Heart right ventricle (tissue), 16 donors: ENCODE measurements at regions of chr7 and their contacts with region 1.

Region 1: GRCh38 chr7:80637911-80638765 is at the start of gene CD36:
- DNase-seq: peak in 1 of 2 donors; percentile 70
- ATAC-seq: peak; percentile 58 to 80 (median 73)
- H3K4me3 ChIP-seq: peak within 1 kb of the TSS; percentile 34 to 63 (median 49)
- H3K27ac ChIP-seq: peak within 1 kb of the TSS; percentile 38 to 91 (median 78)
- H3K4me1 ChIP-seq: peaks cover 0 to 69% (median 48%) of the 10 kb centered on the region in 9 donors
- H3K27me3 ChIP-seq: no peaks in the 10 kb centered on the region
- CTCF ChIP-seq: no peak
- total RNA-seq, gene CD36: 509 to 1,458 (median 988) TPM

Region 2: DNA sequence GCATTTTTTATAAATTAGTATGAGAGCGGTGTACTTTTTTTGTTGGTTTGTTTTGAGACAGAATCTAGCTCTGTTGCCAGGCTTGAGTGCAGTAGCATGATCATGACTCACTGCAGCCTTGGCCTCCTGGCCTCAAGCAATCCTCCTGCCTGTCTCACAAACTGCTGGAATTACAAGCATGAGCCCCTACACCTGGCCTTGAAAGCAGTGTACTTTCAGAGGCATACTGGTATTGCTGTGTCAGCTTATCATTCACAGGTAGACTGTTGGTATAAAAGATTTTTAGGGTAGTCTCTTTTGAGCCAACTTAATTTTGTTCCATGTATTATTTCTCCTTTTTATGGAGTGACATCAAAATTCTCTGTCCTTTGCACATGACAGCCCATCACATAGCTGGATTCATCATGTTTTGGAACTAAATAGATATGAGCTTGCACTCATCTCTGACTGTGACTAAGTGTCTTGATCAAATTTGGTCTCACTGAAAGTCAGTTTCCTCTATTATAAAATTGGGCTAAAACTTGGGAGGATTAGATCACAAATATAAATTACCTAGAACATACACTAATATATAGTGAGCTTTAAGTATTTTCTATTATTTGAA is 138.7 kb before region 1 on chr7:
- intact Hi-C with region 1: loop called in 1 of 10 experiments (anchors 5 kb)
- DNase-seq: peak; percentile 23 to 50
- ATAC-seq: peak; percentile 53 to 90 (median 87)
- H3K4me3 ChIP-seq: no peak overlapping the region
- H3K27ac ChIP-seq: peak overlapping the region in 9 of 10 donors; percentile 56 to 84 (median 68)
- H3K4me1 ChIP-seq: peaks cover 6 to 44% (median 33%) of the 10 kb centered on the region in 9 donors
- H3K27me3 ChIP-seq: no peaks in the 10 kb centered on the region
- CTCF ChIP-seq: no peak

Region 3: GRCh38 chr7:80517282-80517747 is 120.8 kb before region 1 on chr7:
- intact Hi-C with region 1: loop called in 1 of 10 experiments (anchors 10 kb)
- DNase-seq: no peak
- ATAC-seq: peak in 6 of 8 donors; percentile 50 to 81 (median 73)
- H3K4me3 ChIP-seq: no peak overlapping the region
- H3K27ac ChIP-seq: peak overlapping the region in 7 of 10 donors; percentile 5 to 64 (median 47)
- H3K4me1 ChIP-seq: peaks cover 0 to 20% (median 12%) of the 10 kb centered on the region in 9 donors
- H3K27me3 ChIP-seq: no peaks in the 10 kb centered on the region
- CTCF ChIP-seq: peak in 5 of 9 donors; percentile 13 to 64 (median 56)

Region 4: GRCh38 chr7:80584778-80585177 is 53.4 kb before region 1 on chr7:
- intact Hi-C with region 1: loop called in 1 of 10 experiments (anchors 10 kb)
- DNase-seq: no peak
- ATAC-seq: peak in 2 of 8 donors; percentile 28 to 59
- H3K4me3 ChIP-seq: no peak overlapping the region
- H3K27ac ChIP-seq: peak overlapping the region in 5 of 10 donors; percentile 23 to 79 (median 69)
- H3K4me1 ChIP-seq: peaks cover 2 to 63% (median 36%) of the 10 kb centered on the region in 9 donors
- H3K27me3 ChIP-seq: no peaks in the 10 kb centered on the region
- CTCF ChIP-seq: no peak

Region 5: GRCh38 chr7:80604436-80604835 is 33.7 kb before region 1 on chr7:
- intact Hi-C with region 1: loop called in 5 of 10 experiments (anchors 2 to 5 kb)
- DNase-seq: no peak
- ATAC-seq: peak; percentile 75 to 94 (median 90)
- H3K4me3 ChIP-seq: peak overlapping the region in 7 of 10 donors; percentile 27 to 53 (median 39)
- H3K27ac ChIP-seq: peak overlapping the region; percentile 51 to 87 (median 74)
- H3K4me1 ChIP-seq: peaks cover 2 to 86% (median 38%) of the 10 kb centered on the region in 9 donors
- H3K27me3 ChIP-seq: no peaks in the 10 kb centered on the region
- CTCF ChIP-seq: no peak

Region 6: GRCh38 chr7:80732630-80733029 is 94.5 kb after region 1 on chr7:
- intact Hi-C with region 1: no loop called
- DNase-seq: no peak
- ATAC-seq: no peak
- H3K4me3 ChIP-seq: no peak overlapping the region
- H3K27ac ChIP-seq: no peak overlapping the region
- H3K4me1 ChIP-seq: peaks cover 0 to 11% (median 0%) of the 10 kb centered on the region in 9 donors
- H3K27me3 ChIP-seq: no peaks in the 10 kb centered on the region
- CTCF ChIP-seq: peak in 4 of 9 donors; percentile 8 to 29 (median 20)

Region 7: GRCh38 chr7:80860554-80860953 is 222.4 kb after region 1 on chr7:
- intact Hi-C with region 1: no loop called
- DNase-seq: no peak
- ATAC-seq: no peak
- H3K4me3 ChIP-seq: no peak overlapping the region
- H3K27ac ChIP-seq: no peak overlapping the region
- H3K4me1 ChIP-seq: peaks cover 0 to 27% (median 5%) of the 10 kb centered on the region in 9 donors
- H3K27me3 ChIP-seq: no peaks in the 10 kb centered on the region
- CTCF ChIP-seq: no peak